HEK293T (cell line): ENCODE measurements at regions of chrX and their contacts with region 1.

Region 1: DNA sequence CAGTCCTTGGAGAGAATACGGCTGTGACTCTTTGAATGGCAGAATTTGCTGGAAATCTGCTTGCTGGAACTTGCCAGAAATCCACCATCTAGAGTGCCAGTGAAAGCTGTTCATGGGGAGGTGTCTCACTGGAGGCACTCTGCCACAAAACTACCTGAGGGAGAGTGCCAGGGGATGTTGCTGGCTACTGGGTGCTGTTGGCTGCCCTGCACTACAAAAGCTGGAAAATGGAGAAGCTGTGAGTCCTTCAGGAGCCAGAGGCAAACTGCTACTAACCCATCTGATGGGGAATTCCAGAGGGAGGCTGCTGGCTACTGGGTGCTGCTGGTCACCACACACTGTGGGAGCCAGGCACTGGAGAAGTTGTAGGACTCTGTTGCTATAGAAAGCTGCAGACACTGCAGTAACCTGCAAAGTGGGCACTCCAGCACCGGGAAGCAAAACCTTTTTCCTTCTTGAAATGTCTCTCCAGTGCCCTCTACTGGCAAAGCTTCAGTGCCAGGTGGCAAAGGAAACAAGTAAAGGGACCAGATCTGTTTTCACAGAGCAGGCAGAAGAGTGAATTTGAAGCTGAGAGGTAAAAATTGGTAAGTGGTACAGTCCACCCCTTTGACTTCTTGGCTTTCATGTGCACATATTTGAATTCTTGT is 47.8 kb upstream of the HSD17B10 start:
- DNase-seq: peak; percentile 56

Region 2: DNA sequence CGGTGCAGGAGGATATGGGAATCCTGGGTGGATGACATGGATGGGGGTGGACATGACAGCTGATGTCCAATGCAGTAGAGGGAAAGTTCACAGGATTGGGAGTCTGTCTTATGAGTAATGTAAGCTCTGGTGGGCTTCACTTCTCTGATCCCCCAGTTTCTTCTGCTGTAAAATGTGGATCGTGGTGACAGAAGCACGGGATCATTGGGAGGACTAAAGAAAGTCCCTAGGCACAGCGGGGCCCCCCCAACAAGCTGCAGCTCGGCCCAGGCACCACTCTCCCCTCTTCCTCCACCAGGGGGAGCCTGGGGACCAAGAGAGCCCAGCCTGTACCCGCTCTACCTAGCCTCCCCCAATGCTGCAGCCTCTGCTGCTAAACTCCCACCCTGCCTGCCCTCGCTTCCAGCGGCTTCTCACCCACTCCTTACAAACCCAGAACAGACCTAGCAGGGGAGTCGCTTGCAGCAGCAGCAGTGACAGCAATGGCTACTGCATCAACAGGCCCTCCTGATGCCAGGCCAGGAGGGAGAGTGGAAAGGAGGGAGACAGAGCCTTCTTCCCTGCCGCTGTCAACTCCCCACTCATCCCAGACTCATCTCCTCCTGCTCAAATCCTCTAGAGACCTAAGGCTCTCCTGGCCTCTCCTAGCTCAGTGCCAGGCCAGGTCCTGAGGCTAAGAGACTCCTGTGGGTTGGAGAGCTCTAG is 164.4 kb before region 1 on chrX:
- CTCF ChIA-PET with region 1: interaction called, 11 read pairs
- POLR2A ChIA-PET with region 1: no interaction called
- DNase-seq: peak; percentile 82

Region 3: DNA sequence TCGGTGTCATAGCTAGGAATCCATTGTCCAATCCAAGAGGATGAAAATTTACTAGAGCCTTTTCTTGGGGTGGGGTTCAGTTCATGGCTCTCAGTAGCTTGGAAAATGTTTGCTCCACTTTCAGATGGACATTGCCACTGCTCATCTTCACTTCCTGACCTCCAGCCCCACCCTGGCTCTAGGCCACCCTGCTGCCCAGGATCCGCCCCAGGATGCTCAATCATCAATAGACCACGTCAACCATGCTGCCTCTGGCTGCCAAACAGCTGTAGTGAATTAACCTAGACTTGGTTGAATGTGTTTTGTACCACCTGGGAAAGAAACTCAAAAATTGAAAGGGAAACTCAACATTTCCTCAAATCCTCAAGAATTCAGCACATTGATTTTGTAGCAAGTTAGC is 10.6 kb before region 1 on chrX:
- CTCF ChIA-PET with region 1: interaction called, 11 read pairs
- POLR2A ChIA-PET with region 1: no interaction called
- DNase-seq: no peak

Region 4: GRCh38 chrX:53494436-53494835 is 12.5 kb after region 1 on chrX:
- CTCF ChIA-PET with region 1: interaction called, 15 read pairs
- POLR2A ChIA-PET with region 1: no interaction called
- DNase-seq: no peak

Region 5: GRCh38 chrX:53511322-53511721 is 29.4 kb after region 1 on chrX:
- CTCF ChIA-PET with region 1: no interaction called
- POLR2A ChIA-PET with region 1: no interaction called
- DNase-seq: no peak